Activated CD4-positive, alpha-beta T cell treated with anti-CD3 and anti-CD28 coated beads for 36 hours (primary cell): ENCODE measurements at regions of chr11 and their contacts with region 1.

Region 1: GRCh38 chr11:1202776-1203504 is 19.9 kb upstream of the MUC5B start:
- DNase-seq: peak; percentile 82
- ATAC-seq: peak; percentile 85
- H3K4me3 Mint-ChIP-seq: no peak overlapping the region
- H3K27ac Mint-ChIP-seq: no peak overlapping the region
- H3K4me1 Mint-ChIP-seq: no peaks in the 10 kb centered on the region
- H3K27me3 Mint-ChIP-seq: no peaks in the 10 kb centered on the region

Region 2: DNA sequence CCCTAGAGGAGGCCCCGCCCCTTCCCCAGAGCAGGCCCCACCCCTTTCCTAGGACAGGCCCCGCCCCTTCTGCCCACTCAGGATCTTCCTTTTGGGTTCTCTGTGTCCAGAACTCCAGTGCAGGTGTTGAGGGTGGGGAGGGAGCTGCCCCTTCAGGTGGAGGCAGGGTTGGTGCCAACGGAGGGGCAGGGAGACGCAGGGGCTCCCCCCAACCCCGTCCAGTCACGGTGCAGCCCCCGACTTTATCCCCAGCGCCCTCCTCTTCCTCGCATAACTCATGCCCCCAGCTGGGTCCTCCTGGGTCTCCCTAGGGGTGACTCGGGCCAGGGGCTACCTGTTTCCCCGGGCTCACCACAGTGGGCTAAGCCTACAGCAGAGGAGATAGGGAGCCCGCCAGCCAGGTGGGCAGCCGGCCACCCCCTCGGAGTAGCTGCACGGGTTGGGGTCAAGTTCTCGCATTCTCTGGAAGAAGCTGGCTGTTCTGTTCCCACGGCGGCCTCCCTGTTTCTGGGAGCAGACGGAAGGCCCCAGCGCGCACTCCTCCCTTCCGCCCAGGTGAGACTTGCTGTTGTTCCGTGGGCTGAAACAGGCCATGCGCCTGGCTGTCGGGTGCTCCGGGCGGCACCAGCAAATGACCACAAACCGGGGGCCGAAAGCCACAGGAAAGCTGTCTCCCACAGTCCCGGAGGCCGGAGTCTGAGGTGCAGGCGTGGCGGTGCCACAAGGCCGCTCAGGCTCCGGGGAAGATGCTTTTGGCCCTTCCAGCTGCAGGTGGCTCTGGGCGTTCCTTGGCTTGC is 89.3 kb before region 1 on chr11:
- CTCF ChIA-PET with region 1: no interaction called
- POLR2A ChIA-PET with region 1: no interaction called
- intact Hi-C with region 1: loop called in 1 of 2 experiments (anchors 5 kb)
- DNase-seq: peak; percentile 32
- ATAC-seq: peak; percentile 37
- H3K4me3 Mint-ChIP-seq: no peak overlapping the region
- H3K27ac Mint-ChIP-seq: no peak overlapping the region
- H3K4me1 Mint-ChIP-seq: no peaks in the 10 kb centered on the region
- H3K27me3 Mint-ChIP-seq: no peaks in the 10 kb centered on the region

Region 3: GRCh38 chr11:1410366-1411291 is 207.7 kb after region 1 on chr11:
- CTCF ChIA-PET with region 1: no interaction called
- POLR2A ChIA-PET with region 1: no interaction called
- intact Hi-C with region 1: loop called in 1 of 2 experiments (anchors 10 kb)
- DNase-seq: no peak
- ATAC-seq: no peak
- H3K4me3 Mint-ChIP-seq: no peak overlapping the region
- H3K27ac Mint-ChIP-seq: no peak overlapping the region
- H3K4me1 Mint-ChIP-seq: no peaks in the 10 kb centered on the region
- H3K27me3 Mint-ChIP-seq: no peaks in the 10 kb centered on the region